ENCODE measurements at regions of chr19 and their contacts with region 1.

Region 1: GRCh38 chr19:4208385-4209094 is 20.8 kb upstream of the EBI3 start:
- DNase-seq: peak; percentile 53
- H3K4me3 ChIP-seq: no peak overlapping the region
- H3K27ac ChIP-seq: no peak overlapping the region
- H3K4me1 ChIP-seq: no peaks in the 10 kb centered on the region
- CTCF ChIP-seq: peak; percentile 78

Region 2: GRCh38 chr19:4164262-4164661 is 44.3 kb before region 1 on chr19:
- CTCF ChIA-PET with region 1: no interaction called
- POLR2A ChIA-PET with region 1: no interaction called
- intact Hi-C with region 1: loop called (anchors 1 kb)
- DNase-seq: no peak
- H3K4me3 ChIP-seq: no peak overlapping the region
- H3K27ac ChIP-seq: no peak overlapping the region
- H3K4me1 ChIP-seq: no peaks in the 10 kb centered on the region
- CTCF ChIP-seq: no peak

Region 3: DNA sequence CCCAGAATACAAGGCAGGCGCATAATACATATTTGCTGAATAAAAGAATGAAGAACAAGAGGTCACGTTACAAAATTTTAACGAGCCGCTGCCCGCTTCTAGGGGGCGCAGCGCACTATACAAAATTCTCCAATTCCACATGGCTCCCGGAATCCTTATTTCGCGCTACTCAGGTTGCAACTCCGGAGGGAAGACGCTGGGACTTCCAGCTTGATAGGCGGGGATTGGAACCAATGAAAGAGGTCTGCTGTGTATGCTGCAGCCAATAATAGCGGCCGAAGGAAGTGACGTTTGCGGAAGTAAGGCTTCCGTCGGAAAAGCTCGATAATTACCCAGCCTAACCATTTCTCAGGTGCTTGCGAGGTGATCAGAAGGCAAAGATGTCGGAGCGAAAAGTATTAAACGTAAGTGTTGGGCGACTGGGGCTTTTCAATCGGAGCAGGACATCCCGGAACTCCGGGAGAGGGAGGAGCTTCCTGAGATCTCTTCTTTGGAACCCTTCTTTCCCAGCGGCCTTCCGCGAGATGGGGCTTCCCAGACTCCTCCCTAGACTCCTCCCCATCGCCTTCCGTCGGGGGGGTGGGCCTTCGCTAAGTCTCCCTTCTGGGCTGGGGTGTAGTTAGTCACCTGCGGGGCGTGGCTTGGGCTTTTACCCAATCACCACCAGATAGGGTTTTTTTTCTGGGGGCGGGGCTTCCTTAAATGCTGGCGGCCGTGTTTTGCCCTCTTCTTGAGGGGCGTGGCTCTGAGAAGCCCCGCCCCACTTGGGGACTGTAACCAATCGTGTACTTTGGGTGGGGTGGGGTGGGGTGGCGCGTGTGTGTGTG is 38.4 kb after region 1 on chr19 and contains the start of gene YJU2:
- CTCF ChIA-PET with region 1: no interaction called
- POLR2A ChIA-PET with region 1: no interaction called
- intact Hi-C with region 1: no loop called
- DNase-seq: peak; percentile 100
- H3K4me3 ChIP-seq: peak within 1 kb of the TSS; percentile 74
- H3K27ac ChIP-seq: peak within 1 kb of the TSS; percentile 83
- H3K4me1 ChIP-seq: peaks cover 27% of the 10 kb centered on the region
- CTCF ChIP-seq: peak; percentile 86
- total RNA-seq, gene YJU2: 37.8 and 38.2 TPM in 2 replicates

Measured in OCI-LY7 (cell line).